Activated naive CD4-positive, alpha-beta T cell treated with anti-CD3 and anti-CD28 coated beads, Interleukin-2, amount 10 ng/mL, durations not matched to agents 7 days and 5 days (primary cell): ENCODE measurements at regions of chr9 and their contacts with region 1.

Region 1: DNA sequence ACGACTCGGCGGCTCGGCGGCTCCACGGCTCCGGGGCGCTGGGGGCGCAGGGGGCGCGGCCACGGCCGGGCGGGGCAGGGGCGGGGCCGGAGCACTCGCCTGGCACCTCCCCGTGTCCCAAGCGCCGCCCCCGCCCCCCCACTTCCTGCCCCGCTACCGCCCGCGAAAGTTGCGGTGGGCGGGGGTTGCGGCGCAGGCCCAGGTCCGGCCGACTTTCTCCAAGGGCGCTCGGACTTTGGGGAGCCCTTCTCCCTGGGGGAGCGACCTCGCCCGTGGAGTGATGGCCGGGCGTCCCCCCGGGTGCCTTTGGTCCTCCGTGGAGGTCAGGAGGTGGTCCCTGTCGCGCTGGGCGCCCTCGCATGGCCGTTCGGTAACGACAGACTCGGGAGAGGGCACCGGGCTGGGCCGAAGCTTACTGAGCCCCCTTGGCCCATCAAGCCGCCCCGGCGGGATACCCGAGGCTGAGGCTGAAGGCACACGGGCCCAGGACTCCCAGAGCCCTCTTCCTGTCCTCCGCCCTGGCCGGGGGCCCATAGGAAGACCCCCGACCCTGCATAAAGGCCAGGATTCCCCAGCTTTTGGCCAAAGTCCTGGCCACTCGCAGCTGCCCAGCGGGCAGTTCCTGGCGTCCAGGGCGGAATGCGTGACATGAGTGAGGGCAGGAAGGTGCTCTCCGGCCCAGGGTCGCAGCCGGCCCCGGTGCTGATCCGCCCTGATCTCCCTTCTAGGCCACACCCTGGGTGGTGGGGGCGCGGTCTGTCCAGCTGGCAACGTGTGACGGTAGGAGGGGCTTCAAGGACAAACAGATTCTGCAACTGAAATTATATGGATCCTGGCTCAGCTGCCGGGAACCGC is 883 bp upstream of the VAV2 start:
- DNase-seq: peak; percentile 81
- H3K4me3 Mint-ChIP-seq: peak overlapping the region; percentile 69
- H3K27ac Mint-ChIP-seq: peak overlapping the region; percentile 72
- H3K4me1 Mint-ChIP-seq: peaks cover 2% of the 10 kb centered on the region
- H3K27me3 Mint-ChIP-seq: peaks cover 56% of the 10 kb centered on the region

Region 2: GRCh38 chr9:133782157-133783130 is 210.6 kb before region 1 on chr9:
- CTCF ChIA-PET with region 1: interaction called, 107 read pairs
- DNase-seq: peak; percentile 85
- H3K4me3 Mint-ChIP-seq: no peak overlapping the region
- H3K27ac Mint-ChIP-seq: no peak overlapping the region
- H3K4me1 Mint-ChIP-seq: peaks cover 22% of the 10 kb centered on the region
- H3K27me3 Mint-ChIP-seq: no peaks in the 10 kb centered on the region

Region 3: DNA sequence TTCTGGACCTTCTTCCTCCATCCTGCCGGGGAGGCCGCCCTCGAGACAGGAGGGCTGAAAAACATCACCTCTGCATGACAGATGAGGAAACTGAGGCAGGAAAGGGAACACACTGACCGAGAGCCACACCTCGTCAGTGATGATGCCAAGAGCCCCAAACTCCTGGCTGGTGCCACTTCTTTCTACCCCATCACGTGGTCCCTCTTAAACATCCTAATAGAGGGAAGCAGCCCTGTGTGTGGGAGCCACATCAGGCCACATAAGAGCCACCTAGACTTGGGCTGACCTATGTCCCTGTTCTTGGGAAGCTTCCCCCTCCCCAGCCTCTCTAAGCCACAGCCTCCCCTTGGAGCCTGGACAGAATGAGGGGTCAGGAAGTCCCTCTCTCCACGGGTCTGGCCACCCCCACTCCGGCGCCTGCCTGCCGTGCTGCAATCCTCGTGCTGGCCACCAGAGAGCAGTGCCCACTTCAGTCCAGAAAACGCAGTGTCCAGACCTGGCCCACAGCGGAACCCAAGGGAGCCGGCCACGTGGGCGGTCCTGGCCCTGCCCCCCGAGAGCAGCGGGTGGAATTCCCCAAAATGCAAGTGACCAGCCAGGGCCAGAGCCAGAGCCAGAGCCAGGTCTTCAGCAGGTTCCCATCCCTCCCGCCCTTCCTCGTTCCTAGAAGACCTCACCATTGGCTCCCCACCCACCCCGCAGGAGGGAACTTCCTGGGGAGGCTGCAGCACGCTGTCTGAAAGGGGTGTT is 200.1 kb before region 1 on chr9:
- CTCF ChIA-PET with region 1: interaction called, 45 read pairs
- DNase-seq: peak; percentile 69
- H3K4me3 Mint-ChIP-seq: no peak overlapping the region
- H3K27ac Mint-ChIP-seq: no peak overlapping the region
- H3K4me1 Mint-ChIP-seq: peaks cover 21% of the 10 kb centered on the region
- H3K27me3 Mint-ChIP-seq: peaks cover 21% of the 10 kb centered on the region

Region 4: DNA sequence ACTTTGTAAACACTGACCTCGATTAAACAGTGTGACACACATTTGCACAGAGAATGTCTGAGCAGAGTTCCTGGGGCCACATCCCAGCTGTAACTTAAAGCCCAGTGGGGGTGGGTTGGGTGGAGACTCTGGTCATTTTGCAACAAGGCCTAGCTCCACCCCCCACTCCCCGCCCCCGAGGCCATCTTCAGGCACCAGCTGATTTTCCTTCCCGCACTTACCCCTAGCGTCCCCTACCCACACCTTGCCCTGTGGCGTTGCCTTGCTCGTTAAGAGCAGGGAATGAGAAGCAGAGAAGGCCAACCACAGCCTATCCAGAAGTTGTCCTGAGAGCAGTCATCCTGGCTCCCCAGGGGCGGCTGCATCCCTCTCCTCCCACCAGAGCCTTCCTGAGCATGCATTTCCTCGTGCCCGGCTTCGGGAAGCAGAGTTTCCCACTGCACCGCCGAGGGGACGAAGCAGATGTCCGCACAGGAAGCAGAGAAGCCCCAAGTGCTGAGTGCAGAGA is 153.1 kb before region 1 on chr9:
- CTCF ChIA-PET with region 1: no interaction called
- DNase-seq: no peak
- H3K4me3 Mint-ChIP-seq: no peak overlapping the region
- H3K27ac Mint-ChIP-seq: no peak overlapping the region
- H3K4me1 Mint-ChIP-seq: no peaks in the 10 kb centered on the region
- H3K27me3 Mint-ChIP-seq: peaks cover 15% of the 10 kb centered on the region